ENCODE measurements at regions of chr5 and their contacts with region 1.

Region 1: GRCh38 chr5:172035039-172035438 is 28.6 kb upstream of the FBXW11 start:
- DNase-seq: no peak
- H3K4me3 Mint-ChIP-seq: no peak overlapping the region
- H3K27ac Mint-ChIP-seq: no peak overlapping the region
- H3K4me1 Mint-ChIP-seq: peaks cover 13% of the 10 kb centered on the region
- H3K27me3 Mint-ChIP-seq: no peaks in the 10 kb centered on the region

Region 2: DNA sequence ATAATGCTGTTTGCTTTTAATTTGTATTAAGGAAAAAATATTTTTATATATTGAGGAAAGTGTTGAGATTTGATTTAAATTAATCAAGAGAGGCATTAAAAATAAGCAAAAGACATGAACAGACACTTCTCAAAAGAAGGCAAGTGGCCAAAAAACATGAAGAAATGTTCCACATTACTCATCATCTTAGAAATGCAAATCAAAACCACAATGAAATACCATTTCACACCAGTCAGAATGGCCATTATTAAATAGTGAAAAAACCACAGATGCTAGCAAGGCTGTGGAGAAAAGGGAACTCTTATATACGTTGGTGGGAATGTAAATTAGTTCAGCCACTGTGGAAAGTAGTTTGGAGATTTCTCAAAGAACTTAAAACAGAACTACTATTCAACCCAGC is 1127.3 kb before region 1 on chr5:
- CTCF ChIA-PET with region 1: no interaction called
- intact Hi-C with region 1: no loop called
- DNase-seq: no peak
- H3K4me3 Mint-ChIP-seq: no peak overlapping the region
- H3K27ac Mint-ChIP-seq: no peak overlapping the region
- H3K4me1 Mint-ChIP-seq: no peaks in the 10 kb centered on the region
- H3K27me3 Mint-ChIP-seq: no peaks in the 10 kb centered on the region

Region 3: GRCh38 chr5:171418316-171418981 is 616.6 kb before region 1 on chr5:
- CTCF ChIA-PET with region 1: no interaction called
- intact Hi-C with region 1: loop called (anchors 2 kb)
- DNase-seq: peak; percentile 71
- H3K4me3 Mint-ChIP-seq: peak overlapping the region; percentile 53
- H3K27ac Mint-ChIP-seq: no peak overlapping the region
- H3K4me1 Mint-ChIP-seq: peaks cover 13% of the 10 kb centered on the region
- H3K27me3 Mint-ChIP-seq: peaks cover 25% of the 10 kb centered on the region

Region 4: GRCh38 chr5:171481576-171482433 is 553.2 kb before region 1 on chr5:
- CTCF ChIA-PET with region 1: no interaction called
- intact Hi-C with region 1: no loop called
- DNase-seq: no peak
- H3K4me3 Mint-ChIP-seq: no peak overlapping the region
- H3K27ac Mint-ChIP-seq: no peak overlapping the region
- H3K4me1 Mint-ChIP-seq: peaks cover 7% of the 10 kb centered on the region
- H3K27me3 Mint-ChIP-seq: peaks cover 1% of the 10 kb centered on the region

Region 5: DNA sequence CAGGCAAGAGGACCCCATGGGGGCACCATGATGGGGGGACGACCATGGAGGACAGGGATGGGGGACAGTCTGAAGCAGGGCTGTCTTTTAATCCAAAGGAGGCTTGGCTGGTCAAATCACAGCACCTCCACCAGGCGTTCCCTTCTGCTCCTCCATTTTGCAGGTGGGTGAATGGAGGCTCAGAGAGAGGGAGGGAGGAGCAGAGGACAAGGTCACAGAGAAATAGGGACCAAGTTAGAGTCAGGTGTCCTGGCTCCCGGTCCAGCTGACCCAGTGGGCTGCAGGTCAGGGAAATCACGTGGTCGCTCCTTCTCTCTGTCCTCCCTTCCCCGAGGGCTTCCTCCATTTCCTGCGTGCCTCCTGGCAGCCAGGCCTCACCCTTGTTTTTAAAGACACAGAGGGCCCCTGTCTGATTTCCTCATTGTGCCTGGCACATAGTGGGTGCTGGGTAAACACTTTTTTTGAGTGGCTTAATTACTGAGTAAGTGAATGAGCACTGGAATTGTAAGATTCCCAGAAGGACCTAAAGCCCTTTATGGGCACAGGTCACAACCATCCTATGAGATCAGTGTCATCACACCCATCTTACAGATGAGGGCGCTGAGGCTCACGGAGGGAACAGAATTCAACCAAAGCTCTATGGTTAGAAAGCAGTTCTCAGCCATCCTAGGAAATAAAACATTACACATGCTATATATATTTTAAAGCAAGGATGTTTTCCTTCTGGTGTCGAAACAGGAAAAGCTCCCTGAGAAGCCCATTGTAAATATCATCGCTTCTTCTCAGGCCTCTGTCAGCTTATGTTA is 405.6 kb before region 1 on chr5:
- CTCF ChIA-PET with region 1: no interaction called
- intact Hi-C with region 1: loop called (anchors 10 kb)
- DNase-seq: peak; percentile 35
- H3K4me3 Mint-ChIP-seq: no peak overlapping the region
- H3K27ac Mint-ChIP-seq: no peak overlapping the region
- H3K4me1 Mint-ChIP-seq: no peaks in the 10 kb centered on the region
- H3K27me3 Mint-ChIP-seq: peaks cover 28% of the 10 kb centered on the region

Region 6: GRCh38 chr5:172293054-172293744 is 258.2 kb after region 1 on chr5:
- CTCF ChIA-PET with region 1: no interaction called
- intact Hi-C with region 1: loop called (anchors 1 kb)
- DNase-seq: peak; percentile 76
- H3K4me3 Mint-ChIP-seq: no peak overlapping the region
- H3K27ac Mint-ChIP-seq: no peak overlapping the region
- H3K4me1 Mint-ChIP-seq: no peaks in the 10 kb centered on the region
- H3K27me3 Mint-ChIP-seq: peaks cover 3% of the 10 kb centered on the region